Left cardiac atrium (tissue), 4 donors: ENCODE measurements at regions of chr7 and their contacts with region 1.

Region 1: GRCh38 chr7:153381275-153382040 is 621.9 kb downstream of the ACTR3B start:
- DNase-seq: peak; percentile 28
- ATAC-seq: peak; percentile 59 to 89

Region 2: GRCh38 chr7:153682628-153683027 is 301.2 kb after region 1 on chr7:
- intact Hi-C with region 1: loop called in 1 of 2 experiments (anchors 10 kb)
- DNase-seq: no peak
- ATAC-seq: no peak

Region 3: GRCh38 chr7:153835104-153835503 is 453.6 kb after region 1 on chr7:
- intact Hi-C with region 1: loop called in 1 of 2 experiments (anchors 10 kb)
- DNase-seq: no peak
- ATAC-seq: peak; percentile 53 to 60